ENCODE measurements at regions of chr11 and their contacts with region 1.

Region 1: GRCh38 chr11:27370374-27370773 is 7.4 kb upstream of the CCDC34 start:
- DNase-seq: no peak
- ATAC-seq: no peak
- H3K4me3 ChIP-seq: no peak overlapping the region
- H3K27ac ChIP-seq: no peak overlapping the region
- H3K4me1 ChIP-seq: peaks cover 71% of the 10 kb centered on the region
- H3K27me3 ChIP-seq: no peaks in the 10 kb centered on the region
- CTCF ChIP-seq: no peak
- POLR2A ChIP-seq: no peak

Region 2: DNA sequence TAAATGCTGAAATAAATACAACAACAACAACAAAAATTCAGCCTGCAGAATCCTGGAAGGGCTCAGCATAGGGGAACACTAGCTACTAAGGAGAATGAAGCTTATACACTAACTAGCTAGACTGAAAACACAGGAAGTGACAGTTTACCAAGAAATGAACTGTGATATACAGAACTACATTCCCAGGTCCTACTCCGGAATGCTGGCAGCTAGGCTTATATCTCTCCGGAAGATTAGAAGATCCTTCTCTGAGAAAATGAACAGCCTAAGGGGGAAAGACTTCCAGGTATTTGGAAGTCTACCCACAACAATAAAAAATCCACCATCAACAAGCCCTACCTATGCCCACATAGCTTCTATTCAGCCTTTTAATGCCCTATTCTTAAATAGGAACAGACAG is 38.4 kb before region 1 on chr11:
- intact Hi-C with region 1: no loop called
- DNase-seq: no peak
- ATAC-seq: no peak
- H3K4me3 ChIP-seq: no peak overlapping the region
- H3K27ac ChIP-seq: no peak overlapping the region
- H3K4me1 ChIP-seq: peaks cover 5% of the 10 kb centered on the region
- H3K27me3 ChIP-seq: no peaks in the 10 kb centered on the region
- CTCF ChIP-seq: no peak
- POLR2A ChIP-seq: no peak

Region 3: GRCh38 chr11:27472398-27473016 is 102.1 kb after region 1 on chr11 and contains the start of gene LGR4:
- intact Hi-C with region 1: loop called (anchors 10 kb)
- DNase-seq: peak; percentile 97 to 98 (median 98)
- ATAC-seq: peak; percentile 83
- H3K4me3 ChIP-seq: peak within 1 kb of the TSS; percentile 64 to 68
- H3K27ac ChIP-seq: peak within 1 kb of the TSS; percentile 96 to 99 (median 97)
- H3K4me1 ChIP-seq: peaks cover 5% of the 10 kb centered on the region
- H3K27me3 ChIP-seq: no peaks in the 10 kb centered on the region
- CTCF ChIP-seq: no peak
- POLR2A ChIP-seq: peak; percentile 95 to 99 (median 98)
- total RNA-seq, gene LGR4: 120 to 145 TPM